ENCODE measurements at regions of chr12 and their contacts with region 1.

Region 1: DNA sequence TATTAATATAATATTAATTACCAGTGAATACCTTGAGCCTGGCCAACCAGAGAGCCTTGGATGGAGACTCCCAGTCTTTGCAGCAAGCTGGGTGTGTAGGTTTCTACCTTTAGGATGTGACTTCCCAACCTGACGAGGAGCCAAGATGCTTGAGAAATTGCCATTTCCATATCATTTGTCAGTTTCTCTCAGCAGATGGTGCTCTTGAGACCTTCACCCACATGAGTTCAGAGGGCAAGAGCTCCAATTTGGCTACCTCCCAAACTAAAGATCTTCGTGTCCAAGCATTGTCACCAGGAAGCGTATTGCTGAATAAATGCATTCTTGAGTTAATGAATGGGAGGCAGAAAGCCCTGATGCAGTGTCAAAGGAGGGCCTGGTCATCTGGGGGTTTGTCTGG is 106.4 kb upstream of the TBX5 start:
- DNase-seq: no peak
- H3K4me3 ChIP-seq: no peak overlapping the region
- H3K4me1 ChIP-seq: no peaks in the 10 kb centered on the region
- H3K27me3 ChIP-seq: peaks cover 12% of the 10 kb centered on the region

Region 2: DNA sequence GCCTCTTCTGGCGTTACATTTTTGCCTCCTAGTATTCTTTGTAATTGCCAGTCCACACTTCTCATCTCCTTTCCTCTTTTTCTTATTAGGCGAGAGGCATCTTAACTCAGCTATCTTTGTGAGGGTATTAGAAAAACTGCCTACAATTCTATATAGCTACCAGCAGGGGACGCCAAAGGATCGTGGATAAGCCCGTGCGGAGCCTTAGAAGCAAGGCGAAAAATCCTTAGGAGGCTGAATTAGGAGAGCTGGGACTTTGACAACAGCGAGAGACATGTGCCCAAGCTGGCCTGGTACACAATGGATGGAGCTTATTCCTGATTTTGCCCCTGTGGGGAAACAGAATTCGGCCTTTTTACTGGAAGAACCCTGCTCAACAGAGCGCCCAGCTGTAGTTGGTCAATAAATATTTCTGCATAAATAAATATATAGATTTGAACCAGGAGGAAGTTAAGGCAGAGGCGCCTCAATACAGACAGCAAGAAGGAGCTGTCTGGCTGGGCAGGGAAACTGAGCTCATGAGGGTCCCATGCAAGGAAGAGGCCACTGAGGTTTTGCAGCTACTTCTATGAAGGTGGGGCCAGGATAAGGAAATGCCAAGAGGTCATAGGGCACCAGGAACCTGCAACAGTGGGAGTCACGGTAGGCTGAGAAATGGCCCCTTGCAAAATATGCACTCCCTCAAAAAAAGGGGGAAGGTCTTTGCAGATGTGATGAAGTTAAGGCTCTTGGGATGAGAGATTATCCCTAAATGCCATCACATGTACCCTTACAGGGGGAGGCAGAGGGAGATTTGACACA is 531.6 kb before region 1 on chr12:
- in situ Hi-C with region 1: loop called (anchors 10 kb)
- DNase-seq: peak; percentile 70 to 80
- H3K4me3 ChIP-seq: no peak overlapping the region
- H3K4me1 ChIP-seq: no peaks in the 10 kb centered on the region
- H3K27me3 ChIP-seq: no peaks in the 10 kb centered on the region

Region 3: GRCh38 chr12:114918535-114919233 is 406.3 kb after region 1 on chr12:
- in situ Hi-C with region 1: no loop called
- DNase-seq: no peak
- H3K4me3 ChIP-seq: no peak overlapping the region
- H3K4me1 ChIP-seq: no peaks in the 10 kb centered on the region
- H3K27me3 ChIP-seq: no peaks in the 10 kb centered on the region

Measured in HAP-1 (cell line).